Caco-2 (cell line): ENCODE measurements at regions of chr18 and their contacts with region 1.

Region 1: GRCh38 chr18:23053776-23054457 is 81.4 kb upstream of the CABLES1 start:
- DNase-seq: peak; percentile 46 to 57
- H3K4me3 ChIP-seq: no peak overlapping the region
- H3K4me3 Mint-ChIP-seq: no peak overlapping the region
- H3K27ac Mint-ChIP-seq: no peak overlapping the region
- H3K4me1 ChIP-seq: no peaks in the 10 kb centered on the region
- H3K4me1 Mint-ChIP-seq: no peaks in the 10 kb centered on the region
- H3K27me3 ChIP-seq: no peaks in the 10 kb centered on the region
- H3K27me3 Mint-ChIP-seq: no peaks in the 10 kb centered on the region
- CTCF ChIP-seq: peak; percentile 35 to 47

Region 2: GRCh38 chr18:22800551-22800951 is 253.4 kb before region 1 on chr18:
- CTCF ChIA-PET with region 1: no interaction called
- POLR2A ChIA-PET with region 1: no interaction called
- intact Hi-C with region 1: loop called (anchors 1 kb)
- DNase-seq: no peak
- H3K4me3 ChIP-seq: no peak overlapping the region
- H3K4me3 Mint-ChIP-seq: no peak overlapping the region
- H3K27ac Mint-ChIP-seq: no peak overlapping the region
- H3K4me1 ChIP-seq: no peaks in the 10 kb centered on the region
- H3K4me1 Mint-ChIP-seq: no peaks in the 10 kb centered on the region
- H3K27me3 ChIP-seq: no peaks in the 10 kb centered on the region
- H3K27me3 Mint-ChIP-seq: no peaks in the 10 kb centered on the region
- CTCF ChIP-seq: no peak

Region 3: GRCh38 chr18:23032030-23032582 is 21.8 kb before region 1 on chr18:
- CTCF ChIA-PET with region 1: no interaction called
- POLR2A ChIA-PET with region 1: no interaction called
- intact Hi-C with region 1: loop called (anchors 2 kb)
- DNase-seq: no peak
- H3K4me3 ChIP-seq: no peak overlapping the region
- H3K4me3 Mint-ChIP-seq: no peak overlapping the region
- H3K27ac Mint-ChIP-seq: no peak overlapping the region
- H3K4me1 ChIP-seq: peaks cover 3% of the 10 kb centered on the region; the same call in 1 of the 2 replicates
- H3K4me1 Mint-ChIP-seq: no peaks in the 10 kb centered on the region
- H3K27me3 ChIP-seq: no peaks in the 10 kb centered on the region
- H3K27me3 Mint-ChIP-seq: no peaks in the 10 kb centered on the region
- CTCF ChIP-seq: no peak